B cell (primary cell): ENCODE measurements at regions of chr10 and their contacts with region 1.

Region 1: DNA sequence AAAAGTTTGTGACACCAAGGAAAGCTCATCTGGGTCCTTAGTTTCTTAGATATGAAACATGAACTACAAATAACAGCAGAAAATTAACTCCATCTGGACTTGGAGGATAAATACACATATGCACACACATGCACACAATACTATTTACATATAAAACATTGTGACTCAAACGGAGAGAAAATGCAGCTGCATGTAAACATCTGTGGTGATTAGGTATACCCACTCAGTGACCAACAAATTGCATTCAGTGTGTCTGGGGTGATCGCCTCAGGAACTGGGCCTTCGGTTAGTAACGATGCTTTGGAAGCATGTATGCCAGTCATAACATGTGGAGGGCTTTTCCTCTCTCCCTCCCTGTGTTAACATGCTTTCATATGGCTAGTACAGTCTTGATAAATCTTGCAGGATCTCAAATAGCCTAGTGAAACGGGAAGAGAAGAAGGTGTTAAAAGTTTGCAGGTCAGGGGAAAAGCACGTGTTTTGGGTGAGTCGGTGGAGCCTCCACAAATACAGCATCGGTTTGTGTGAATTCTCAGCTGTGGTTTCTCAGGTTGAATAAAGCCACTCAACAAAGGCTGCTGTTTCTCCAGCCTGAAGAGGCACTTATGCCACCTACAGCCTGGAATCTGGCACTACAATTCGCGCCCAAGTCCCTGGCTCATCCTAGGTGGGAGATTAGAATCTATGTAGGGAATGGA is 8.7 kb upstream of the GLRX3 start:
- DNase-seq: peak; percentile 64
- ATAC-seq: peak; percentile 70
- H3K4me3 ChIP-seq: no peak overlapping the region
- H3K4me3 Mint-ChIP-seq: no peak overlapping the region
- H3K27ac ChIP-seq: no peak overlapping the region
- H3K27ac Mint-ChIP-seq: no peak overlapping the region
- H3K4me1 ChIP-seq: peaks cover 3 to 4% of the 10 kb centered on the region in 2 donors
- H3K4me1 Mint-ChIP-seq: peaks cover 5% of the 10 kb centered on the region
- H3K27me3 ChIP-seq: peaks cover 0 to 28% (median 12%) of the 10 kb centered on the region in 4 experiments
- H3K27me3 Mint-ChIP-seq: peaks cover 52% of the 10 kb centered on the region
- CTCF ChIP-seq: peak; percentile 80

Region 2: DNA sequence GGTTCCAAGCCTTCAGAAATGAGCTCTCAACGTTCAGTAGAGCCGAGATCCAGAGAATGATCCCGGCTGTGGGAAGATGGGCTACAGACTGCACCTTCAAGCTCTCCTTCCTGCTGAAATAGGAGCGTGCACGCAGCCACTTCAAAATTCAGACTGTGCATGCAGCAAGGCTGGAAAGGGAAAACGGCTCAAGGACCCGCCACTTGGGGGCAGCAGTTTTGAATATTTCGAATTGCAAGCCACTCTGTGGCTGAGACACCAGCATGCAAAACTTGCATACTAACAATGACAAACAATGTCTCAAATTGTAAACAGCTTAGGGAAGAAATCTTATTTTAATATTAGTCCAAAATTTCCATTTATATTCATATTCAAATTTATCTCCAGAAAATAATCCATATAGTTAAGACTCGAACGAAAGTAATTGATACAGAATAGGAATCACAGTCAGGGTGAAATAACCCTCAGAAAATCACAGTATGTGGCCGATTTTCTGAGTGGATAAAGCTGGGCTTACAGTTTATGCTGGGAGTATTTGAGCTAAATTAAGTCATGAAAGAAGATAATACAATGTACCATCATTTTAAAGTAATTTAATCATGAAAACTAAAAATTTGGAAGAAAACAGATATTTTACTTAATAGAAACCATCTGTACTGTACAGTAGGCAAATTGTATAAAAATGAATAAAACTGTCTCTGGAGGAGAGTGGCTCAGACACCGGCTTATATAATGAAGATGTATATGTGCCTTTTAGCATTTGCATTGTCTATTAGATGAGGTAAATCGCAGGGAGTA is 1863.4 kb before region 1 on chr10:
- CTCF ChIA-PET with region 1: interaction called, 7 read pairs
- POLR2A ChIA-PET with region 1: no interaction called
- intact Hi-C with region 1: loop called (anchors 5 kb)
- DNase-seq: peak; percentile 28
- ATAC-seq: no peak
- H3K4me3 ChIP-seq: no peak overlapping the region
- H3K4me3 Mint-ChIP-seq: no peak overlapping the region
- H3K27ac ChIP-seq: no peak overlapping the region
- H3K27ac Mint-ChIP-seq: no peak overlapping the region
- H3K4me1 ChIP-seq: no peaks in the 10 kb centered on the region
- H3K4me1 Mint-ChIP-seq: no peaks in the 10 kb centered on the region
- H3K27me3 ChIP-seq: peaks cover 0 to 37% (median 5%) of the 10 kb centered on the region in 4 experiments
- H3K27me3 Mint-ChIP-seq: peaks cover 41% of the 10 kb centered on the region
- CTCF ChIP-seq: peak; percentile 62

Region 3: DNA sequence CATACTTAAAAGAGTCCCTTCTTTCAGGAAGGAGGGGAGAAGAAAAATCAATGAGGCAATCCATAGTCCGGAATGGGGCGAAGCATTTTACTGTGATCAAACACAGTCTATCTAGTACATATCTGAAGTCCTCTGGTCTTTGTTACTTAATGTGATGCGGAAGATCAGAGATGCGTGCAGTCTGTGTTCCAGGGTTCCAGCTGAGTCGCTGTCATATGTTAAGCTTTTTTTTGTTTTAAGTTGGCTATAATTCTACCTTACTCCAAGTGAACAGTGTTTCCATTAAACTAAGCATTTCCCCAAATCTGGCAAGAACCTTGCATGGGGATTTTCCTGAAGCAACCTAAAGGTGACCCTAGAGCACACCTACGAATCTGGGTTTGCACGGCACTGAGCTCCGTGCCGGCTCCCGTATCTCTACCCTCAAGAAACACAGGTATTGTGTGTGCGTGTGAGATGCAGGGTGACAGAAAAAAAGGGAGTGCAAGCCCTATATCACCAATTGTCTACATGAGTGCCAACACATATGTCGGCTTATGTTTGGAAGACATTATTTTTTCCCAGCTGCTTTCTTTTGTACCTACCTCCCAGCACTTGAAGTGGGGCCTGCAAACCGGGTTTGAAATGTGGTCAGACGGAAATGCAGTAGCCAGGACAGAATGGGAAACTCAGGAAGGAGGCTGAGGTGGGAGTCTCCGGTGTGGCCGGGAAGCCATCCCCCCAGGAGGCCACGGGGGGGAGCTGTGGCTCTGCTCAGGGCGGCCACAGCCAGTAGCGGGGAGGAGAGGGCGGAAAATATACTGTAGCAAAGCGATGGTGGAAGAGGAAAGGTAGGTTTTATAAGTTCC is 1096.3 kb before region 1 on chr10:
- CTCF ChIA-PET with region 1: interaction called, 23 read pairs
- POLR2A ChIA-PET with region 1: no interaction called
- intact Hi-C with region 1: no loop called
- DNase-seq: peak; percentile 21
- ATAC-seq: peak; percentile 67
- H3K4me3 ChIP-seq: no peak overlapping the region
- H3K4me3 Mint-ChIP-seq: no peak overlapping the region
- H3K27ac ChIP-seq: no peak overlapping the region
- H3K27ac Mint-ChIP-seq: no peak overlapping the region
- H3K4me1 ChIP-seq: peaks cover 7 to 9% of the 10 kb centered on the region in 2 donors
- H3K4me1 Mint-ChIP-seq: peaks cover 8% of the 10 kb centered on the region
- H3K27me3 ChIP-seq: peaks cover 0 to 17% (median 1%) of the 10 kb centered on the region in 4 experiments
- H3K27me3 Mint-ChIP-seq: peaks cover 31% of the 10 kb centered on the region
- CTCF ChIP-seq: peak; percentile 50

Region 4: DNA sequence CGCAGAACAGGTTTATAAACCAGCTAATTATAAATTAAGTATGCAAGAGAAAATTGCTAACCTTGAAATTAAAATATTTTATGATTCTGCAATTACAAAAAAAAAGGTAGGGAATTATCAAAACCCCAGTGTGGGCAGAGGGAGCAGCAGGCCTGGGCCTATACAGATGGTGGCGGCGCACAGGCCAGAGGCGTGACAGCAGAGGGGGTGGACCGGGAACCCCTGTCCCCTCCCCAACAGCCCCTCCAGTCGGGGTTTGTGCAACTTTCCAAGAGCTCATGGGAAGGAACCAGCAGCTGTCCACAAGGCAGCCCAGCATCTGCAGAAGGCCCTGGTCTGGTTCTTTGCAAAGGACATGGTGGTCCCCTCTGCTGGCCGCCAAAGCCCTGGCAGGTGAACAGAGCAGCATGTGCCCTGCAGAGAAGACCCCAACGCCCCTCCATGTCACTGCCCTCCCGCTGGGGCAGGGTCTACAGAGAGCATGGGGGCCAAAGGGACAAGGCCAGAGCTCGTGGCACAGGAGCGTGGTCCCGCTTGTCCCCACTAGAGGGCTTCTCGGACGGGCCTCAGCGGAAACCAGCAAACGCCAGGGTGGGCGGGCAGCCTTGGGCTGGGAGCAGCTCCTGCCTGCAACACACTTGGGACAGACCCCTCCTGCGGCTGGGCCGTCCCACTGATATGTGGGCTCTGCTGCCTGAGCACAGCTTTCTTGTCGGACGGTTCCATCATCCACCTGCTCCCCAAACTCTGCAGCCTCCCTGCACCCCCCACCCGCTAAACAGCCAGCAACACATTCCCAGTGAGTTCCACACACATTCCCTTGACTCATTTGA is 238.5 kb before region 1 on chr10:
- CTCF ChIA-PET with region 1: no interaction called
- POLR2A ChIA-PET with region 1: no interaction called
- intact Hi-C with region 1: loop called (anchors 5 kb)
- DNase-seq: peak; percentile 26
- ATAC-seq: no peak
- H3K4me3 ChIP-seq: no peak overlapping the region
- H3K4me3 Mint-ChIP-seq: no peak overlapping the region
- H3K27ac ChIP-seq: no peak overlapping the region
- H3K27ac Mint-ChIP-seq: no peak overlapping the region
- H3K4me1 ChIP-seq: no peaks in the 10 kb centered on the region
- H3K4me1 Mint-ChIP-seq: no peaks in the 10 kb centered on the region
- H3K27me3 ChIP-seq: no peaks in the 10 kb centered on the region
- H3K27me3 Mint-ChIP-seq: peaks cover 4% of the 10 kb centered on the region
- CTCF ChIP-seq: peak; percentile 64